Ascending aorta (tissue), 2 donors: ENCODE measurements at regions of chr11 and their contacts with region 1.

Region 1: GRCh38 chr11:86938900-86939880 is 16.0 kb downstream of the FZD4 start:
- DNase-seq: no peak
- H3K4me3 ChIP-seq: no peak overlapping the region
- H3K27ac ChIP-seq: peak overlapping the region; percentile 74
- H3K4me1 ChIP-seq: peaks cover 19 to 58% of the 10 kb centered on the region in 2 donors
- H3K27me3 ChIP-seq: no peaks in the 10 kb centered on the region
- CTCF ChIP-seq: peak; percentile 58 to 72 (median 67)

Region 2: GRCh38 chr11:86876716-86877234 is 62.4 kb before region 1 on chr11:
- intact Hi-C with region 1: no loop called
- DNase-seq: no peak
- H3K4me3 ChIP-seq: no peak overlapping the region
- H3K27ac ChIP-seq: no peak overlapping the region
- H3K4me1 ChIP-seq: no peaks in the 10 kb centered on the region
- H3K27me3 ChIP-seq: no peaks in the 10 kb centered on the region
- CTCF ChIP-seq: no peak

Region 3: GRCh38 chr11:87290304-87290922 is 351.2 kb after region 1 on chr11:
- intact Hi-C with region 1: loop called (anchors 1 kb)
- DNase-seq: no peak
- H3K4me3 ChIP-seq: no peak overlapping the region
- H3K27ac ChIP-seq: no peak overlapping the region
- H3K4me1 ChIP-seq: peaks cover 0 to 2% of the 10 kb centered on the region in 2 donors
- H3K27me3 ChIP-seq: no peaks in the 10 kb centered on the region
- CTCF ChIP-seq: peak; percentile 52 to 71 (median 52)

Region 4: GRCh38 chr11:87352759-87353707 is 413.8 kb after region 1 on chr11:
- intact Hi-C with region 1: loop called (anchors 5 kb)
- DNase-seq: peak; percentile 33 to 92
- H3K4me3 ChIP-seq: peak overlapping the region in 1 of 2 donors; percentile 30
- H3K27ac ChIP-seq: peak overlapping the region; percentile 47 to 50
- H3K4me1 ChIP-seq: peaks cover 0 to 15% of the 10 kb centered on the region in 2 donors
- H3K27me3 ChIP-seq: no peaks in the 10 kb centered on the region
- CTCF ChIP-seq: peak; percentile 97 to 99 (median 99)

Region 5: DNA sequence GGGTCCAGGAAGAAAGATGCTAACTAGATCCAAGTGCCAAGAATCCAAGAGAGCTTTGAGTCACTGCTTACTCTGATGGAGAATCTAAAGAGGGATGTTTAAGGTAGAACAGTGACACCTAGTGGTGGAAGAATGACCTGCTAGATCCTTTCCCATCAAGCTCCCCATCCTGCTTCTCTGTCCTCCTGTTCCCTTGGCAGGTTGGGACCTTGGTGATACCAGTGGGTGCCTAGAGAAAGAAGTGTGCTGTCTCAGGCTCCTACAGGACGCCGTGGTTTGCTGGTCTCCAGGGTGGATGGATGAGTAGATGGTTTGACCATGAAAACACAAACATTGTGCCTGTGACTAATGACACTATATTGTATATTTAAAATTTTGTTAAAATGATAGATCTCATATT is 482.2 kb after region 1 on chr11:
- intact Hi-C with region 1: loop called (anchors 5 kb)
- DNase-seq: peak in 1 of 2 donors; percentile 70
- H3K4me3 ChIP-seq: no peak overlapping the region
- H3K27ac ChIP-seq: no peak overlapping the region
- H3K4me1 ChIP-seq: peaks cover 3 to 9% of the 10 kb centered on the region in 2 donors
- H3K27me3 ChIP-seq: no peaks in the 10 kb centered on the region
- CTCF ChIP-seq: peak; percentile 61 to 75 (median 70)